Sigmoid colon (tissue), 7 donors: ENCODE measurements at regions of chr3 and their contacts with region 1.

Region 1: DNA sequence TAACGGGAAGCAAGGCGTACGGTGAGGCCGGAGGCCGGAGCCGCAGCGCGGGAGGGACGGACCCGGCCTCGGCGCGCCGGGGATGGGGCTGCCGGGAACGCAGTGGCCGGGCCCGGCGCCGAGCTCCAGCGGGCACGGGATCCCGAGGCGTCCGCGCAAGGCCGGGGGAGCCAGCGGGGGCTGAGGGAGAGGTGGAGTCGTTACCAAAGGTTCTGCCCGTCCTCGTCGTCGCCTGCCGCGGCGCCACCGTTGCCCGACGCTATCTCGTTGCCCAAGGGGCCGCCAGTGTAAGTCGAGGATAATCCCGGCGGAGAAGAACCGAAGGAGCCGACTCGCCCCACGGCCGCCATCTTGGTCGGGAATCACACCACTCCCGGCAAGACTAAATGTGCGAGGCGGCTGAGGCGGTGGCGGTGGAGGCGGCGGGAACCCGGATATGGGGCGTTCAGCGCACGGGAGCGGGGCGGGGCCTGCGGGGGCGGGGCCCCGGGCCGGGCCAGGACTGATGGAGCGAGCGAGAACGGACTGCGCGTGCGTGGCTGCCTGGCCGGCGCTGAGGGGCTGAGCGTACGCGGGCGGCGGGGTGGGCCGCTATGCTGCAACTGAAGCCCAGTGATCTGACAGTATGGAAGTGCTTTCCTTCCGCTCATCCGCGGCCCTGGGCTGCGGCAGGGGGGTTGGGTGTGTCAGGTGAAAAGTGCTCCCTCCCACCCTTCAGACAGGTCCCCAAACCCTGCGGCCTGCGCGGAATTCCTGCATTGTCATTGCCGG is at the start of gene DYNC1LI1:
- DNase-seq: peak; percentile 97
- H3K4me3 ChIP-seq: peak within 1 kb of the TSS; percentile 73 to 96 (median 94)
- H3K27ac ChIP-seq: peak within 1 kb of the TSS; percentile 98 to 99 (median 98)
- H3K4me1 ChIP-seq: peaks cover 0 to 29% (median 20%) of the 10 kb centered on the region in 4 donors
- H3K27me3 ChIP-seq: no peaks in the 10 kb centered on the region
- CTCF ChIP-seq: peak in 1 of 4 experiments; percentile 1
- EP300 ChIP-seq: no peak
- POLR2A ChIP-seq: peak; percentile 32 to 40
- total RNA-seq, gene DYNC1LI1: 17.2 to 36.0 (median 29.5) TPM

Region 2: DNA sequence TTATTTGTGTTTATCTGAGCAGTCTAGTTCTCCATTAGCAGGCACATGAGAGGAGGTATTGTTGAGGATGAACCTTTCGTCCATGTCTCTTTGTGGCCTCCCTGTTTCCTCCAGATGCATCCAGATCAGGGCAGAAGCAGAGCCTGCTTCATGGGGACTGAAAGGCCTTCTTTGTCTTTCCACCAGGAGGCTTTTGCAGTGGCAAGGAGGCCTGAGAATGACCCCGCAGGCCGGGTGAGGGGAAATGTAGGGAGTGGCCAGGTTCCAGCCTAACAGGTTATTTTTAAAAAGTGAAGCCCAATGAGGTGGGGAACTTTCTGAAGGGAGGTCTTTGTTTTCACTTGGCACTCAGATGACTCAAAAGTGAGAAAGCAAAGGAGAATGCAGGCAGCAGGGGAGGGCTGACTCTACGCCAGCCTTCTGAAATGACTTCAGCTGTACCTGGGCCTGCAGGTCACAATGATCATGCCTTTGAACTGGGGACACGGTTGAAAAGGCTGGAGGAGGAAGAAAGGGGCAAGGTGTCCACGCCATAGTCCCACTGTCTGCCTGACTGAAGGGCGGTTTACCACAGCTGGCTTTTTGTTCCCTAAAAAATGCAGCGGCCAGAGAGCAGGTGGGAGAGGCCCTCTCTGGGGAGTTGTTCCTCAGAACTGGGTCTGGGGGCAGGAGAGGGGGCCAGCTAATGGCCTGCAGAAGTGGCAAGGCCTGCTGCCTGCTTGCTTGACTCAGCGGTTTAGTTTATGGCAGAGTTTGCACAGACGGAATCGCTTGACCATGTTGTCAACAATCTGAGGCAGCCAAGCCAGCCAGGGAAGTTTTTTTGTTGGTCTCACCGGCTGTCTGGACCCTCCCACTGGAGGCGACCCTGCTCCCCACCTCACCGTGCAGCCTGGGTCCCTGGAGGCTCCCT is 150.2 kb before region 1 on chr3:
- intact Hi-C with region 1: loop called (anchors 10 kb)
- DNase-seq: no peak
- H3K4me3 ChIP-seq: no peak overlapping the region
- H3K27ac ChIP-seq: peak overlapping the region; percentile 49 to 72 (median 63)
- H3K4me1 ChIP-seq: peaks cover 0 to 25% (median 23%) of the 10 kb centered on the region in 4 donors
- H3K27me3 ChIP-seq: no peaks in the 10 kb centered on the region
- CTCF ChIP-seq: no peak
- EP300 ChIP-seq: no peak
- POLR2A ChIP-seq: no peak

Region 3: DNA sequence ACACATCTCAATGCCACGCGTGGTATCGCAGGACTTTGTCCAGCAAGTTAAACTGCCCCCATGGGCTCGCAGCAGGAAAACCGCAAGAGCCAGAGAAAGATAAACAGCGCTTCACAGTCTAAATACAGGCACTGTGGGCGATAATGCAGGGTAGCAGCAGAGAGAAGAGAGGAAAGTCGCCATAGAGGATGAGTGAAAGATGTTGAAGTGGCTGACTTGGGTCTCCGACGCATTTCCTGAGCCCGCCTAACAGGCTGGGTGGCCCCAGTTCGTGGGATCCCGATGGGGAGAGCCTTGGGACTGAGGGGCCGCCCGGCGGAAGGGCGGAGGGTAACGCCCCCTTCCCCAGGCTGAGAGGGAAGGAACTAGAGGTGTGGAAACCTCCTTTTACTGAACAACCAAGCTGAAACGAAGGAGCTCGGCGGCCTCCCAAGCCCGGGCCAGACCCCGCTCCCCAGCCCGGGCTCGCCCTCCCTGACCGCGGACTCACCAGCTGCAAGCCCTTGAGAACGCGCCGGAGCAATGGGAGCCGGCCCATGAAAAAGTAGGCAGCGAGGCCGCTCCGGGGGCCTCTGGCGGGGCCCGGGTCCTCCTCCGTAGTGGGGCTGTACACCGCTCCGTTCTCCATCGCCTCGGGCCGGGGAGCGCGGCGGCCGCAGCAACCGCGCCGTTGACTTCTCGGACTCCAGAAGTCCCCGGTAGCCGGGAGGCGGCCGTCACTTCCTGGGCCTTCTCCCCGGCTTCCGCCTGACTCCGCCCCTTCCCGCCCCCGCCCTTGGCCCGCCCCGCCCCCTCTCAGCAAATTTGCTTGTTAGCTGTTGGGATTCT is 68.3 kb before region 1 on chr3 and contains the start of gene CMTM6:
- intact Hi-C with region 1: loop called (anchors 2 kb)
- DNase-seq: peak; percentile 91
- H3K4me3 ChIP-seq: peak within 1 kb of the TSS; percentile 67 to 98 (median 95)
- H3K27ac ChIP-seq: peak within 1 kb of the TSS; percentile 96 to 99 (median 97)
- H3K4me1 ChIP-seq: peaks cover 0 to 22% (median 18%) of the 10 kb centered on the region in 4 donors
- H3K27me3 ChIP-seq: no peaks in the 10 kb centered on the region
- CTCF ChIP-seq: no peak
- EP300 ChIP-seq: peak in 1 of 4 donors; percentile 32
- POLR2A ChIP-seq: peak; percentile 37 to 49
- total RNA-seq, gene CMTM6: 37.7 to 82.0 (median 55.4) TPM

Region 4: GRCh38 chr3:32684800-32685542 is 114.4 kb after region 1 on chr3 and contains the start of gene CNOT10:
- intact Hi-C with region 1: loop called (anchors 2 kb)
- DNase-seq: peak; percentile 96
- H3K4me3 ChIP-seq: peak within 1 kb of the TSS; percentile 66 to 97 (median 73)
- H3K27ac ChIP-seq: peak within 1 kb of the TSS; percentile 80 to 87 (median 85)
- H3K4me1 ChIP-seq: peaks cover 0 to 19% (median 17%) of the 10 kb centered on the region in 4 donors
- H3K27me3 ChIP-seq: no peaks in the 10 kb centered on the region
- CTCF ChIP-seq: peak in 2 of 4 experiments; percentile 15 to 16
- EP300 ChIP-seq: no peak
- POLR2A ChIP-seq: peak; percentile 9 to 27
- total RNA-seq, gene CNOT10: 13.0 to 33.5 (median 21.6) TPM

Region 5: GRCh38 chr3:33717866-33718594 is 1147.4 kb after region 1 on chr3 and contains the start of gene CLASP2:
- intact Hi-C with region 1: loop called (anchors 10 kb)
- DNase-seq: peak; percentile 94
- H3K4me3 ChIP-seq: peak within 1 kb of the TSS; percentile 69 to 94 (median 83)
- H3K27ac ChIP-seq: peak within 1 kb of the TSS; percentile 96 to 99 (median 96)
- H3K4me1 ChIP-seq: peaks cover 0 to 16% (median 12%) of the 10 kb centered on the region in 4 donors
- H3K27me3 ChIP-seq: no peaks in the 10 kb centered on the region
- CTCF ChIP-seq: no peak
- EP300 ChIP-seq: no peak
- POLR2A ChIP-seq: peak; percentile 31
- total RNA-seq, gene CLASP2: 77.7 to 122 (median 94.5) TPM